CD8-positive, alpha-beta T cell (primary cell): ENCODE measurements at regions of chr3 and their contacts with region 1.

Region 1: GRCh38 chr3:113707835-113708234 is 11.4 kb upstream of the USF3 start:
- DNase-seq: no peak
- ATAC-seq: no peak
- H3K4me3 ChIP-seq: no peak overlapping the region
- H3K4me3 Mint-ChIP-seq: no peak overlapping the region
- H3K27ac ChIP-seq: no peak overlapping the region
- H3K27ac Mint-ChIP-seq: no peak overlapping the region
- H3K4me1 ChIP-seq: no peaks in the 10 kb centered on the region
- H3K4me1 Mint-ChIP-seq: no peaks in the 10 kb centered on the region
- H3K27me3 ChIP-seq: no peaks in the 10 kb centered on the region
- H3K27me3 Mint-ChIP-seq: peaks cover 22% of the 10 kb centered on the region
- CTCF ChIP-seq: no peak

Region 2: DNA sequence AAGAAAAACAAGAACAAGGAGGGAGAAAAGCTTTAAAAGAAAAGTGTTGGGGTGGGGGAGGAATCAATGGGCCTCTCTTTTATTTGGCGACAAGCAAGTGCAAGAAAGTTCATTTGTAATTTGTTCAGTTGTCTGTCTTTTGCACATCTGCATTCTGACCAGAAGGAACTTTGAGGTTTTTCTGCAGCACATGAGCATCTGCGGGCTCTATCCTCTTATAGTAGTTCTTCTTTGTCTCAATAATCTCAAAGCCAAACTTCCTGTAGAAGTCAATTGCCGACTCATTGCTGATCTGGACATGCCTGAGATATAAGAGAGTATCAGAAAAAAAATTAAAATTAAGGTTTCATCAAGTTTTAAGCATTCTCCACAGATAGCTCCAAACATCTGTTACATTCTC is 13.8 kb after region 1 on chr3:
- CTCF ChIA-PET with region 1: no interaction called
- POLR2A ChIA-PET with region 1: no interaction called
- intact Hi-C with region 1: loop called in 1 of 2 experiments (anchors 2 kb)
- DNase-seq: no peak
- ATAC-seq: no peak
- H3K4me3 ChIP-seq: no peak overlapping the region
- H3K4me3 Mint-ChIP-seq: no peak overlapping the region
- H3K27ac ChIP-seq: no peak overlapping the region
- H3K27ac Mint-ChIP-seq: no peak overlapping the region
- H3K4me1 ChIP-seq: no peaks in the 10 kb centered on the region
- H3K4me1 Mint-ChIP-seq: peaks cover 20% of the 10 kb centered on the region
- H3K27me3 ChIP-seq: no peaks in the 10 kb centered on the region
- H3K27me3 Mint-ChIP-seq: no peaks in the 10 kb centered on the region
- CTCF ChIP-seq: no peak

Region 3: DNA sequence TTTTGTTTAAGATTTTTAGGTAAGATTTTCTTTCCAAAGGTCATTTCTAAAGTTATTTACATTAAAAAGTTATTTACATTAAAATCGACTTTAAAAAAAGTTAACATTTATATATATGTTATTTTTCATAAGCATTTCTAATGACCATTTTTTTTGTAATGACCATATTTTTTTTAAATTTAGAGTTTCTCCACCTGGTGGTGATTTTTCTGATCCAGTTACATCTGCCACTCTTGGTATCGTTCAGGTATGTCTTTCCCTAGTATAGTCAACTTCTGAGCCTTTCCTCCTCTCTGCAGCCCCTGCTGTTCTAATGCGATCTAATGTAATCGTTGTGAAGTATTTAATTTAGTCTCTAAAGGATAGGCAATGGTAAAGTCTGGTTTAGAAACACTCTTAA is 87.9 kb after region 1 on chr3:
- CTCF ChIA-PET with region 1: no interaction called
- POLR2A ChIA-PET with region 1: no interaction called
- intact Hi-C with region 1: no loop called
- DNase-seq: peak in 1 of 9 experiments; percentile 12
- ATAC-seq: no peak
- H3K4me3 ChIP-seq: no peak overlapping the region
- H3K4me3 Mint-ChIP-seq: no peak overlapping the region
- H3K27ac ChIP-seq: no peak overlapping the region
- H3K27ac Mint-ChIP-seq: no peak overlapping the region
- H3K4me1 ChIP-seq: no peaks in the 10 kb centered on the region
- H3K4me1 Mint-ChIP-seq: no peaks in the 10 kb centered on the region
- H3K27me3 ChIP-seq: no peaks in the 10 kb centered on the region
- H3K27me3 Mint-ChIP-seq: no peaks in the 10 kb centered on the region
- CTCF ChIP-seq: no peak